ENCODE measurements at regions of chr6 and their contacts with region 1.

Region 1: GRCh38 chr6:27251606-27252251 is 4.2 kb downstream of the PRSS16 start:
- DNase-seq: peak; percentile 92
- CTCF ChIP-seq: peak; percentile 65

Region 2: DNA sequence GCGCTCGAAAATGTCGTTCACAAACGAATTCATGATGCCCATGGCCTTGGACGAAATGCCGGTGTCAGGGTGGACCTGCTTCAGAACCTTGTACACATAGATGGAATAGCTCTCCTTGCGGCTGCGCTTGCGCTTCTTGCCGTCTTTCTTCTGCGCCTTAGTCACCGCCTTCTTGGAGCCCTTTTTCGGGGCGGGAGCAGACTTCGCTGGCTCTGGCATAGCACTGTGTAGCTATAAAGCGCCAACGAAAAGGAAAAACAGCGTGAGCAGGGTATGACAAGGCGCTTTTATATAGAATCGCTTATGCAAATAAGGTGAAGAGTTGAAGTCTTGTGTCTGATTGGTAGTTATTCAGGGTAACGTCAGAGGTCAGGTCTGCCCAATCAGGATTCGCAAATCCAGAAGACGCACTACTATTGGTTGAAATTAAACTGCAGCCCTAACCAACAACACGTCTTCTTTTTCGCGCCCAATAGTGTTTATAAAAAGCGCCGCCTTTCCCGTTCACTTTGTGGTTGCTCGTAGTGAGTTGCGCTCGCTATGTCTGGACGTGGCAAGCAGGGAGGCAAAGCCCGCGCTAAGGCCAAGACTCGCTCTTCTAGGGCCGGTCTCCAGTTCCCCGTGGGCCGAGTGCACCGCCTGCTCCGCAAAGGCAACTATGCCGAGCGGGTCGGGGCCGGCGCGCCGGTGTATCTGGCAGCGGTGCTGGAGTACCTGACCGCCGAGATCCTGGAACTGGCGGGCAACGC is 119.0 kb before region 1 on chr6:
- CTCF ChIA-PET with region 1: no interaction called
- POLR2A ChIA-PET with region 1: interaction called, 14 read pairs
- DNase-seq: peak; percentile 95
- CTCF ChIP-seq: no peak

Region 3: DNA sequence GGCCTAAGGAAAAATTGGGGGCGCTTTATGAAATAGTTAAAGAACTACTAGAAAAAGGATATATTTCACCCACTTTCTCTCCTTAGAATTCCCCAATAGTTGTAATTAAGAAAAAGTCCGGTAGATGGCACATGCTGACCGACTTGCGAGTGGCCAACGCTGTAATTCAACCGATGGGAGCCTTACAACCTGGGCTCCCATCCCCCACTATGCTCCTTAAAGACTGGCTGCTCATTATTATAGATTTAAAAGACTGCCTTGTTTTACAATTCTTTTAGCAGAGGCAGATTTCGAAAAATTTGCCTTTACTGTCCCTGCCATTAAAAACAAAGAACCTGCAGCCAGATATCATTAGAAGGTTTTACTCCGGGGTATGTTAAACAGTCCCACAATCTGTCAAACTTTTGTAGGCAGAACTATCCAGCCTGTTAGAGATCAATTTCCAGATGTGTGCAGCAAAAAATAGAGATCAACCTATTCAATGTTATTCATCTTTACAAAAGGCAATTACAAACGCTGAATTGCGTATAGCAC is 62.8 kb before region 1 on chr6:
- CTCF ChIA-PET with region 1: interaction called, 10 read pairs
- POLR2A ChIA-PET with region 1: no interaction called
- DNase-seq: peak; percentile 66
- CTCF ChIP-seq: peak; percentile 66

Region 4: DNA sequence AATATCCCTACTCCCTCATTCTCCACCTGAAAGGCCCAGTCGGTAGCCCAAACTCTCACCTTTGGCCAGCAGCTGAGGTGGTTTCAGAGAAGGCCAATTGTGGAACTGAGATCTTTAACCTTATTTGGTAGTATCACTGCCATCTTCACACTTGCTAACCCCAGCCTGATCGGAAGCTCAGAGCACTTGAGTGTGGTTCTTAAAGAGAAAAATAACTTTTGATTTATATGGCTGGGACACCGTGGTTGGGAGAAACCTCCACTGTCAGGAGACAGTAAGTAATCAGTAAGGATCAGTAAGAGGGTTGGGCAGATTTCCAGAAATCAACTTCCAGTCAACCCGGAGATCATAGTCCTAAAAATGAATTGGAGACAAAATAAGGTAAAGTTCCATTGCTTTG is 27.0 kb before region 1 on chr6:
- CTCF ChIA-PET with region 1: no interaction called
- POLR2A ChIA-PET with region 1: no interaction called
- DNase-seq: peak; percentile 57
- CTCF ChIP-seq: no peak

Region 5: DNA sequence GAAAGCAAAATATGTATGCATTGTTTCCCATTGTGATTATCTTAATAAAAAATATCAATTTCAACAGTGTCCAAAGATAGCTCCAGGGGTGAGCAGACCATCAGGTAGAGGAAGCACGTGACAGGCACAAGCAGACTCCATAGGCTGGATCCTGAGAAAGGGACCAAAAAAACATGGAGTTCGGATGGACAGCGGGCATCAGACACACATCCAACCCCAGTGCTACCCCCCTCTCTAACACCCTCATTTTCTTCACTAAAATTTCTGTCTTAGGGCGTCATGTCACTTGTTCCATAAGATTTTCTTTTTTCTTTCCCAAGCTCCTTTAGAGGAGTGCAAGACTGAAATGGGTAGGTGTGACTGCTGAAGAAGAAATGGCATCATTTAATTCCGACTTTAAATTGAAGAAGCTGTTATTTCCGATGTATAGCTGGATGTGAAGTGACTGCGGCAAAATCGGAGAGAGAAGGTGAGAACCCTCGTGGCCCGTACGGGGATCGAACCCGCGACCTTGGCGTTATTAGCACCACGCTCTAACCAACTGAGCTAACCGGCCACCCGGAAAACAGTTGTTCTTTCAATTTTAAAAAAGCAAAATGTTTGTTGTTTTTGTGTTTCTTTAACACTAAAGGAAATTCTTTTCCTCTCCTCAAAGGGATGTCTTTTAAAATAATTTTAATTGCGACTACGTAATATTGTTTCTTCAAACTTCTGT is 14.5 kb before region 1 on chr6:
- CTCF ChIA-PET with region 1: interaction called, 11 read pairs
- POLR2A ChIA-PET with region 1: no interaction called
- DNase-seq: no peak
- CTCF ChIP-seq: no peak

Region 6: GRCh38 chr6:27503436-27504030 is 251.8 kb after region 1 on chr6:
- CTCF ChIA-PET with region 1: no interaction called
- POLR2A ChIA-PET with region 1: no interaction called
- DNase-seq: no peak
- CTCF ChIP-seq: no peak